ENCODE measurements at regions of chr19 and their contacts with region 1.

Region 1: GRCh38 chr19:23395041-23395721 is at the start of gene ZNF91:
- H3K4me3 Mint-ChIP-seq: peak within 1 kb of the TSS; percentile 96
- H3K27ac Mint-ChIP-seq: peak within 1 kb of the TSS; percentile 99
- H3K4me1 Mint-ChIP-seq: peaks cover 8% of the 10 kb centered on the region
- H3K27me3 Mint-ChIP-seq: no peaks in the 10 kb centered on the region

Region 2: GRCh38 chr19:23249911-23250649 is 145.1 kb before region 1 on chr19 and contains the start of gene ZNF724:
- intact Hi-C with region 1: loop called (anchors 10 kb)
- H3K4me3 Mint-ChIP-seq: peak within 1 kb of the TSS; percentile 94
- H3K27ac Mint-ChIP-seq: peak within 1 kb of the TSS; percentile 90
- H3K4me1 Mint-ChIP-seq: peaks cover 5% of the 10 kb centered on the region
- H3K27me3 Mint-ChIP-seq: no peaks in the 10 kb centered on the region

Region 3: GRCh38 chr19:23273590-23274413 is 121.4 kb before region 1 on chr19:
- intact Hi-C with region 1: loop called (anchors 10 kb)
- H3K4me3 Mint-ChIP-seq: peak overlapping the region; percentile 93
- H3K27ac Mint-ChIP-seq: peak overlapping the region; percentile 82
- H3K4me1 Mint-ChIP-seq: peaks cover 10% of the 10 kb centered on the region
- H3K27me3 Mint-ChIP-seq: no peaks in the 10 kb centered on the region

Region 4: DNA sequence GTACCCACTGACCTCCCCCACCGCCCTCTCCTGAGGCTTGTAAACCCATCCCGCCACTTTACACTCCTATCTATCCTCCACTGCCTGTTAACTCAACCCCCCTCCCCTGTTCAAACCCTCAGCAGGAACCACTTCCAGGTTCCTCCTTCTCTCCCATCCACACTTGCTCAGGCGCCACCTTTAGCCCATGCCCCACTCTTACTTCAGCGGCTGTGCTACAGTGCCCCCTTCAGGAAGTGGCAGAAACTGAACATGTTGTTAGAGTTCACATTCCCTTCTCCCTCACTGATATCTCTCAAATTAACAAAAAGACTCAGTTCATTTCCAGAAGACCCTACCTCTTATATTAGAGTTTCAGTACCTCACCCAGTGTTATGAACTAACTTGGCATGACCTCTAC is 49.3 kb before region 1 on chr19:
- intact Hi-C with region 1: no loop called
- H3K4me3 Mint-ChIP-seq: no peak overlapping the region
- H3K27ac Mint-ChIP-seq: no peak overlapping the region
- H3K4me1 Mint-ChIP-seq: no peaks in the 10 kb centered on the region
- H3K27me3 Mint-ChIP-seq: no peaks in the 10 kb centered on the region

Region 5: GRCh38 chr19:23686621-23687423 is 291.6 kb after region 1 on chr19 and contains the start of gene ZNF675:
- intact Hi-C with region 1: loop called (anchors 10 kb)
- H3K4me3 Mint-ChIP-seq: peak within 1 kb of the TSS; percentile 98
- H3K27ac Mint-ChIP-seq: peak within 1 kb of the TSS; percentile 99
- H3K4me1 Mint-ChIP-seq: peaks cover 13% of the 10 kb centered on the region
- H3K27me3 Mint-ChIP-seq: no peaks in the 10 kb centered on the region

Measured in dendritic cell treated with granulocyte-macrophage colony-stimulating factor and Interleukin-4, amounts not matched to agents 40 ng/mL and 50 ng/mL, for 4 days (primary cell).